CD8-positive, alpha-beta T cell (primary cell): ENCODE measurements at regions of chr15 and their contacts with region 1.

Region 1: DNA sequence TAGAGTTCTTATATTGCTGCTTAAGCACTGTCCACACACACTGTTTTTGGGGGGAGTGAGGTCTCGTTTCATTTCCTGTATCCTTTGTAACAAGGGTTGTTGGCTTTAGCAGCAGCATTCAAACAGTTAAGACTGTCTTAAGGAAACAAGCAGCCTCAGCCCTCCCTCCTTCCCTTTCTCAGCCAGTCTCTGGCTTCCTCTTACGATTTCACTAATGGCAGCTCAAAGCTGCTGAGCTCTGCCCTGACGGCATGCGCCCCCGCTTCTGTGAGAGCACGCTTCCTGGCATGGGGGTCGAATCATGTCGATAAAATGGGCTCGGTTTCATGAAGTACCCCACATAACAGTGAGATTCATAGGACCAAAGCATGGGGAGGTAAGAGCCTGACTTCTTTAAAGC is 105.0 kb downstream of the KLHL25 start:
- DNase-seq: peak; percentile 43 to 89 (median 70)
- ATAC-seq: peak; percentile 84
- H3K4me3 ChIP-seq: peak overlapping the region; percentile 62
- H3K4me3 Mint-ChIP-seq: peak overlapping the region; percentile 97
- H3K27ac ChIP-seq: peak overlapping the region; percentile 77 to 86
- H3K27ac Mint-ChIP-seq: peak overlapping the region; percentile 99
- H3K4me1 ChIP-seq: peaks cover 60% of the 10 kb centered on the region
- H3K4me1 Mint-ChIP-seq: peaks cover 76% of the 10 kb centered on the region
- H3K27me3 ChIP-seq: no peaks in the 10 kb centered on the region
- H3K27me3 Mint-ChIP-seq: no peaks in the 10 kb centered on the region
- CTCF ChIP-seq: no peak

Region 2: DNA sequence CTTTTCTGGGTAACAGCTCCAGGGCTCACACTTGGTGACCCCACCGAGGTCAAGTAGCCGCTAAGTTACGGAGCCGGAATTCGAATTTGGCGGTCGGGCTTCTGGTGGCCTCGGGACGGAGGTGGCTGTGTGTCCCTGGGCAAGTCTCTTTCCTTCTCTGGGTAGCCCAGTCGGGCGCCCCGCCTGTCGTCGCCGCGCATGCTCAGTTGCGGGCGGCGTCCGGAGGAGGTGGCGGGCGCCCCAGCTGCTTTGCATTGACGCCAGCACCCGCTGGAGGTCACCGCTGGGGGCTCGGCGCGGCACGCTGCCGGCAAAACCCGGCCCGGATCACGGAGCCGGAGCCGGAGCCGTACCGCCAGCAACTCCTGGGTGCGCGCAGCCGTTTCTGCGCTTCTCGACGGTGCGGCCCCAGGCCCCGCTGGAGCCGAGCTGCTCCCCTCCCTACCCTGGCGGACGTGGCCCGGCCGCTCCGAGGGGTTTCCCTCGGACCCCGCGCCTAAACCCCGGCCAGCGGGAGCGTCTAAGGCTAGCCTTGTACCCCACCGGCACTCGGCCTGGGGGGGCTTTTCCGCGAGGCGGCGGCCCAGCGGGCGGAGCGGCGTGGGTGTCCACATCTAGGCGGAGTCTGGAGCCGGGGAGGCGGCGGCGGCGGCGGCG is 708.5 kb before region 1 on chr15:
- CTCF ChIA-PET with region 1: no interaction called
- POLR2A ChIA-PET with region 1: no interaction called
- intact Hi-C with region 1: loop called (anchors 2 to 10 kb)
- DNase-seq: peak; percentile 92 to 98 (median 95)
- ATAC-seq: peak; percentile 70
- H3K4me3 ChIP-seq: peak overlapping the region; percentile 78 to 94
- H3K4me3 Mint-ChIP-seq: peak overlapping the region; percentile 94
- H3K27ac ChIP-seq: peak overlapping the region; percentile 93 to 94
- H3K27ac Mint-ChIP-seq: peak overlapping the region; percentile 96
- H3K4me1 ChIP-seq: peaks cover 19% of the 10 kb centered on the region
- H3K4me1 Mint-ChIP-seq: peaks cover 39% of the 10 kb centered on the region
- H3K27me3 ChIP-seq: no peaks in the 10 kb centered on the region
- H3K27me3 Mint-ChIP-seq: no peaks in the 10 kb centered on the region
- CTCF ChIP-seq: no peak

Region 3: DNA sequence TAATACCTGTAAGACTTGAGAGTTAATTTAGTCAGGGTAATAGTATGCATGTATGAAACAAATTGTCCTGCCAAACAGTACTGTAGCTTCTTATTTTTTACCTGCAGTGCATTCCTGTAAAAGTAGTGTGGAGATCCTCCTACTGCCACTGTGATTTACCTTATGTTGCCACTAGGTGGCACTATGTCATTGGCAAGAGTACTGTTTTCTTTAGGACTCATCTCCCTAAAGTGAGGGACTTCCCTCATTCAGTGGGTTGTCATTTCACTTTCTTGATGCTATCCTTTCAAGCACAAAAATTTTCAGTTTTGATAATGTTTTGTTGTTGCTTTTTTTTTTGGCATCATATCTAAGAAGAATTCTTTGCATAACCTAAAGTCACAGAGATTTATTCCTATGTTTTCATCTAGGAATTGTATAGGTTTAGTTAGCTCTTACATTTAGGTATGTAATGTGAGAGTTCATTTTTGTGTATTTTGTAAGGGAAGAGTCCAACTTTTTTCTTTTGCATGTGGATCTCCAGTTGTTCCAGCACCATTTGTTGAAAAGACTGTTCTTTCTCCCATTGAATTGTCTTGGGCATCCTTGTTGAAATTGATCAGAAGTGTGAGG is 203.7 kb before region 1 on chr15:
- CTCF ChIA-PET with region 1: interaction called, 3 read pairs
- POLR2A ChIA-PET with region 1: no interaction called
- intact Hi-C with region 1: loop called in 1 of 2 experiments (anchors 5 kb)
- DNase-seq: peak in 8 of 9 experiments; percentile 43 to 85 (median 59)
- ATAC-seq: peak; percentile 86
- H3K4me3 ChIP-seq: no peak overlapping the region
- H3K4me3 Mint-ChIP-seq: no peak overlapping the region
- H3K27ac ChIP-seq: no peak overlapping the region
- H3K27ac Mint-ChIP-seq: no peak overlapping the region
- H3K4me1 ChIP-seq: peaks cover 35% of the 10 kb centered on the region
- H3K4me1 Mint-ChIP-seq: peaks cover 71% of the 10 kb centered on the region
- H3K27me3 ChIP-seq: no peaks in the 10 kb centered on the region
- H3K27me3 Mint-ChIP-seq: no peaks in the 10 kb centered on the region
- CTCF ChIP-seq: peak; percentile 92

Region 4: DNA sequence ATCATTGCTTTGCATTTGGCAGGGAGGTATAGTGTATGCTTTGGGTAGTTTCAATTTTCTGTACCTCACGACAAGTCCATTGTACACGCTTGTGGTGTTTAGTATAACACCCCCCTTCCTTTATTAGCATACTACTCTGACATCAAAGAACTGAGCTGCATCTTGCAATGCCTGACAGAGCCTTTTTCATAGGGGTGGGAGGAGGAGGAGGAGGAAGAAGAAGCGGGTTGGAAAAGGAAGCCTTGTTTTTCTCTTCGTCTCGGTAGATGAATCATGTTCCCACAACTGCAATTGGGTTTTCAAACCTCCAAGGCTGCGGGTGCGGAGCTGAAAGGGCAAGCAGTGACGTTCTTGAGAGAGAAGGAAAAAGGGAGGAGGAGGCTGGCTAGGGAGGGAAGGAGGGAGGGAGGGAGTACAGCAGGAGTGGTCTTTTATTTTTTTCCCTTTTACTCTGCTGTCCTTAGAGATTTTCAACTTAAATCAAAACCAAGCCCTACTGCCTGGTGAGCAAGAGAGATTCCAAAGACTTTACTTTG is 70.7 kb before region 1 on chr15:
- CTCF ChIA-PET with region 1: no interaction called
- POLR2A ChIA-PET with region 1: no interaction called
- intact Hi-C with region 1: loop called in 1 of 2 experiments (anchors 5 kb)
- DNase-seq: peak in 8 of 9 experiments; percentile 30 to 82 (median 59)
- ATAC-seq: peak; percentile 84
- H3K4me3 ChIP-seq: peak overlapping the region in 1 of 2 experiments; percentile 27
- H3K4me3 Mint-ChIP-seq: no peak overlapping the region
- H3K27ac ChIP-seq: peak overlapping the region in 1 of 2 experiments; percentile 58
- H3K27ac Mint-ChIP-seq: no peak overlapping the region
- H3K4me1 ChIP-seq: peaks cover 38% of the 10 kb centered on the region
- H3K4me1 Mint-ChIP-seq: peaks cover 32% of the 10 kb centered on the region
- H3K27me3 ChIP-seq: no peaks in the 10 kb centered on the region
- H3K27me3 Mint-ChIP-seq: no peaks in the 10 kb centered on the region
- CTCF ChIP-seq: no peak

Region 5: DNA sequence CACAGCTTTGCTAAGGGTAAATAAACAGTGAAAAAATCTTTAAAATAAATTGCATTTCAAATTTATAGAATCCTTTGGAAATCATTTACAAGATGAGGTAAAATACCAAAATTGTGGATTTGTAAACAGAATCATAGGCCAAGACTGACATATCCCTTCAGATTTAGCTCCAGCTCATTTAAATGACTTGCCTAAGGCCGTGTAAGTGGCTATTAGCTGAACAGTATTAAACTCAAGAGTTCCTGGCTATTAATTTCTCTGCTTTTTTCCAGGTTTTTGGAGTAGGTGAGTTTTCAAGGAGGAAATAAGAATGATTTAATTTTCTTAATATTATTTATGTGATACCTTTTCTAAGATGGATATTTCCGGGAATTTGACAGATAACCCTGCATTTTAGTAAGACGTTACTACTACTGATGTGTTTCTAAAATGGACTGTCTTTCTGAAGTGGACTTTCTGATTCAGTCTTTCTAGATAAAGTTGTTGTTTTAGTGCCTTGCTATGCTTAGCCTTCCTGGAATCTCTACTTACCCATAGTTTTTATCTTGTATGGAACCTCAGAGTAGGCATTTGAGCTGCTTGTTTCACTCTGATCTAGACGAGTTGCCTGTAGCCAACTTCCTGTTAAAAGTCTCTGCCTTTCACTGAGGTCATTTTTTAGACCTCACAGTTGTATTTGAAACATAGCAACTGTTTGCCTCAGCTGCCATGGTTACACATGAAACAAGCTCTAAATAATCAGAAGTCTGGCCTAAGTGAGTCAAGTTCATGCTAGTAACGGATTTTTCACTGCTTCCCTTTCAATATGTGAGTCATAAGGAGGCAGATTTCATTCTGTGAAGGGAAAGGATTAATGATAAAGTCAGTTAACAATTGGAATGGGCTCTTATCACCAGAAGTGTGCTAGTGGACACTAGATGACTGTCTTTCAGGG is 22.0 kb before region 1 on chr15:
- CTCF ChIA-PET with region 1: no interaction called
- POLR2A ChIA-PET with region 1: interaction called, 5 read pairs
- intact Hi-C with region 1: loop called (anchors 1 to 2 kb)
- DNase-seq: peak in 8 of 9 experiments; percentile 23 to 97 (median 62)
- ATAC-seq: peak; percentile 91
- H3K4me3 ChIP-seq: no peak overlapping the region
- H3K4me3 Mint-ChIP-seq: peak overlapping the region; percentile 40
- H3K27ac ChIP-seq: peak overlapping the region; percentile 53 to 96
- H3K27ac Mint-ChIP-seq: peak overlapping the region; percentile 92
- H3K4me1 ChIP-seq: peaks cover 13% of the 10 kb centered on the region
- H3K4me1 Mint-ChIP-seq: peaks cover 22% of the 10 kb centered on the region
- H3K27me3 ChIP-seq: no peaks in the 10 kb centered on the region
- H3K27me3 Mint-ChIP-seq: no peaks in the 10 kb centered on the region
- CTCF ChIP-seq: no peak

Region 6: DNA sequence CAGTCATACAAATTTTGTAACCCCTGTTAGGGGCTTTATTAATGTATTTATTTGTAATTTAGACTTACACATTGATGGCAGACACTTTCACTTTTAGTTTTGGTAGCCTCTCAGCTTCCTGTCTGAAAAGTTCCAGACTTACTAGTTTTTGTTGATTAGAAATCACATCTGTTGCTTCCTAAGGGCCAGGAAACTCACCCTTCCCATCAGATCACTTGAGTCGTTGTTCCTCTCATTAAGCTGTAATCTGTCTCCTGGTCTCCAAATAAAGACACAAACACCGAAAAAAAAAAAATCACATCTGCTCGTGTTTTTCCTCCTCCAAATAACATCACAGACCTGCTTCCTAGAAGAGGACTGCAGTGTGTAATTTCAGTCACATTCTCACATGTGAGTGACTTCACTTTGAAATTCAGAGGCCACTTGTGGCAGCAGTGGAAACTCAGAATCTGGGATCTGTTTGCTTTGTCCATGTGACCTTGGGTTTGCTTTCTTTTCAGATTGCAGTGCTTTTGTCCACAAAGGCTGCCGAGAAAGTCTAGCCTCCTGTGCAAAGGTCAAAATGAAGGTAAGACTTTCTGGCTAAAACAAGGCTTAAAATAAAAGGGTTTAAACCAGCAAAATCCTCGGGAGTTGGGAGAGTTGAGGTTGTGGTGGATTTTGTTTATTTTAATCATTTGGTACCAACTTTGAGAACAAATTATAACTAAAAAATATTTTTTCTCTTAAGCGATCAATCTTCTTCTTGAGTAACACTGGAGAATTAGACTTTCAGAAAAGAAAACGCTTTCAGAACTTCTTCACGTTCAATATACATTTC is 18.0 kb after region 1 on chr15:
- CTCF ChIA-PET with region 1: interaction called, 9 read pairs
- POLR2A ChIA-PET with region 1: interaction called, 60 read pairs
- intact Hi-C with region 1: loop called (anchors 1 kb)
- DNase-seq: no peak
- ATAC-seq: peak; percentile 22
- H3K4me3 ChIP-seq: peak overlapping the region; percentile 32 to 40
- H3K4me3 Mint-ChIP-seq: peak overlapping the region; percentile 77
- H3K27ac ChIP-seq: peak overlapping the region; percentile 66 to 97
- H3K27ac Mint-ChIP-seq: peak overlapping the region; percentile 99
- H3K4me1 ChIP-seq: peaks cover 56% of the 10 kb centered on the region
- H3K4me1 Mint-ChIP-seq: peaks cover 82% of the 10 kb centered on the region
- H3K27me3 ChIP-seq: no peaks in the 10 kb centered on the region
- H3K27me3 Mint-ChIP-seq: no peaks in the 10 kb centered on the region
- CTCF ChIP-seq: no peak

Region 7: GRCh38 chr15:85794603-85795336 is 105.0 kb after region 1 on chr15 and contains the start of gene KLHL25:
- CTCF ChIA-PET with region 1: no interaction called
- POLR2A ChIA-PET with region 1: no interaction called
- intact Hi-C with region 1: loop called (anchors 1 to 2 kb)
- DNase-seq: peak; percentile 84 to 97 (median 90)
- ATAC-seq: peak; percentile 98
- H3K4me3 ChIP-seq: peak within 1 kb of the TSS; percentile 62 to 86
- H3K4me3 Mint-ChIP-seq: peak within 1 kb of the TSS; percentile 93
- H3K27ac ChIP-seq: peak within 1 kb of the TSS; percentile 40 to 56
- H3K27ac Mint-ChIP-seq: peak within 1 kb of the TSS; percentile 89
- H3K4me1 ChIP-seq: peaks cover 28% of the 10 kb centered on the region
- H3K4me1 Mint-ChIP-seq: peaks cover 39% of the 10 kb centered on the region
- H3K27me3 ChIP-seq: no peaks in the 10 kb centered on the region
- H3K27me3 Mint-ChIP-seq: peaks cover 3% of the 10 kb centered on the region
- CTCF ChIP-seq: no peak
- total RNA-seq, gene KLHL25: 4.3 to 4.9 TPM

Region 8: DNA sequence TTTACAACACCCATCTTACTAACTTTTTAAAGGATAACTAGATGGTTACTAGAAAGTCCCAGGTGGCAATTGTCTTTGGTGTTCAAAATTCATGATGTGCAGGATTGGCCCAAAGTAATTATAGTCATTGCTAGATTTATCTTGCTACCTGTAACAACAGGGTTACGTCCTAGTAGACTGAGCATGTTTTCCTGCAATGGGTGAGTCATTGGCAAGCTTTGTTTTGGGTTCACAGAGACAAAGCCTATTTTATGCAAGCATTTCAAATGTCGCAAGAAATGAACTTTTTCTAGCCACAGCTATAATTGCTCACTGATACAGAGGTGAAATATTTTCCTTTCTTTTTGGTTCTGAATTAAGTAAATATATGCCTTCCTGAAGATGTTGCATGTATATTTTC is 657.5 kb after region 1 on chr15:
- CTCF ChIA-PET with region 1: no interaction called
- POLR2A ChIA-PET with region 1: no interaction called
- intact Hi-C with region 1: no loop called
- DNase-seq: no peak
- ATAC-seq: no peak
- H3K4me3 ChIP-seq: no peak overlapping the region
- H3K4me3 Mint-ChIP-seq: no peak overlapping the region
- H3K27ac ChIP-seq: no peak overlapping the region
- H3K27ac Mint-ChIP-seq: no peak overlapping the region
- H3K4me1 ChIP-seq: no peaks in the 10 kb centered on the region
- H3K4me1 Mint-ChIP-seq: no peaks in the 10 kb centered on the region
- H3K27me3 ChIP-seq: no peaks in the 10 kb centered on the region
- H3K27me3 Mint-ChIP-seq: no peaks in the 10 kb centered on the region
- CTCF ChIP-seq: no peak